Activated T-helper 2 cell treated with anti-CD3 and anti-CD28 coated beads, Interferon-gamma antibody, Interleukin-2, Interleukin-4, amounts not matched to agents 10 μg/mL and 5 μg/mL and 100 μg/mL, durations not matched to agents 14 hours and 24 hours and 36 hours (primary cell): ENCODE measurements at regions of chr7 and their contacts with region 1.

Region 1: GRCh38 chr7:105808703-105809590 is 67.5 kb downstream of the ATXN7L1 start:
- DNase-seq: peak; percentile 85
- H3K4me3 Mint-ChIP-seq: peak overlapping the region; percentile 26
- H3K27ac Mint-ChIP-seq: peak overlapping the region; percentile 81
- H3K4me1 Mint-ChIP-seq: peaks cover 76% of the 10 kb centered on the region
- H3K27me3 Mint-ChIP-seq: no peaks in the 10 kb centered on the region

Region 2: GRCh38 chr7:105298439-105298907 is 510.5 kb before region 1 on chr7:
- intact Hi-C with region 1: loop called (anchors 1 kb)
- DNase-seq: peak; percentile 23
- H3K4me3 Mint-ChIP-seq: peak overlapping the region; percentile 45
- H3K27ac Mint-ChIP-seq: peak overlapping the region; percentile 92
- H3K4me1 Mint-ChIP-seq: peaks cover 50% of the 10 kb centered on the region
- H3K27me3 Mint-ChIP-seq: no peaks in the 10 kb centered on the region

Region 3: GRCh38 chr7:105769901-105770628 is 38.9 kb before region 1 on chr7:
- intact Hi-C with region 1: loop called (anchors 1 kb)
- DNase-seq: no peak
- H3K4me3 Mint-ChIP-seq: no peak overlapping the region
- H3K27ac Mint-ChIP-seq: no peak overlapping the region
- H3K4me1 Mint-ChIP-seq: peaks cover 38% of the 10 kb centered on the region
- H3K27me3 Mint-ChIP-seq: no peaks in the 10 kb centered on the region

Region 4: DNA sequence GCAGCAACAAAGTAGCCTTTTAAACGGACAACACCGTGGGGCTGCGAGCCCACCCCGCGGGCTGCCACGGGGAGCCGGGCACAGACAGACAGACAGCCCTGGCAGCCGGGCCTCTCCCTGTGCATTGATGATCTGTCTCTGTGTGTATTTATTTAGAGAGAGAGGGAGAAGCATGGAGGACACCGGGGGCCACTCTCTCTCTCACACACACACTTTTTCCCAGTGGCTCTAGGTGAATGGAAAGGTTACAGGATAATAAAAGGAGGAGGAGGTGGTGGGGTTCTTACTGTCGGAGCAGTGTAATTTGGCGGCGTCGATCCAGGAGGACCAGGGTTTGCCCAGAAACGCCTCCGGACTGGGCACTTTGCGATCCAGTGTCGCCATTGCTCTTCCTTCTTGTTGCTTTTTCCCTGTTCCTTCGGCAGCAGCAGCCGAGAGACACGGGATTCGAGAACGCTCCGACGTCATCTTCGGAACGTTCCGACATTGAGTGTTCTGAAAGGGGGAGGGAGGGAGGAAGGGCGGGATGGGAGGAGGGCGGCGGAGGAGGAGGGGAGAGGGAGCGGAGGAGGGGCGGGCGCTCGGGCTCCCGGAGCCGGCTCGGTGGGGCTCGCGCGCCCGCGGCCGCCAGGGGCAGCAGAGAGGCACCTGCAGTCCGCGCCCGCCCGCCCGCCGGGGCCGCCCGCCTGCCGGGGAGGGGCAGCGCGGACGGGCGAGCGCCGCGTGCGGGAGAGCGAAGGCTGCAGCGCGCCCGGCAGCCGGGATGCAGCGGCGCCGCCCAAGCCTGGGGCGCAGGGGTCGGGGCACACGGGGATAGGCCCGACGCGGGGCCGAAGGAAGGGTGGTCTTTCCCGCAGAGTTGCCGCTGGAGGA is 67.4 kb after region 1 on chr7 and contains the start of gene ATXN7L1:
- intact Hi-C with region 1: loop called (anchors 1 kb)
- DNase-seq: peak; percentile 81
- H3K4me3 Mint-ChIP-seq: peak within 1 kb of the TSS; percentile 93
- H3K27ac Mint-ChIP-seq: peak within 1 kb of the TSS; percentile 87
- H3K4me1 Mint-ChIP-seq: peaks cover 45% of the 10 kb centered on the region
- H3K27me3 Mint-ChIP-seq: peaks cover 18% of the 10 kb centered on the region
- total RNA-seq, gene ATXN7L1: 11.1 and 12.4 TPM in 2 replicates

Region 5: DNA sequence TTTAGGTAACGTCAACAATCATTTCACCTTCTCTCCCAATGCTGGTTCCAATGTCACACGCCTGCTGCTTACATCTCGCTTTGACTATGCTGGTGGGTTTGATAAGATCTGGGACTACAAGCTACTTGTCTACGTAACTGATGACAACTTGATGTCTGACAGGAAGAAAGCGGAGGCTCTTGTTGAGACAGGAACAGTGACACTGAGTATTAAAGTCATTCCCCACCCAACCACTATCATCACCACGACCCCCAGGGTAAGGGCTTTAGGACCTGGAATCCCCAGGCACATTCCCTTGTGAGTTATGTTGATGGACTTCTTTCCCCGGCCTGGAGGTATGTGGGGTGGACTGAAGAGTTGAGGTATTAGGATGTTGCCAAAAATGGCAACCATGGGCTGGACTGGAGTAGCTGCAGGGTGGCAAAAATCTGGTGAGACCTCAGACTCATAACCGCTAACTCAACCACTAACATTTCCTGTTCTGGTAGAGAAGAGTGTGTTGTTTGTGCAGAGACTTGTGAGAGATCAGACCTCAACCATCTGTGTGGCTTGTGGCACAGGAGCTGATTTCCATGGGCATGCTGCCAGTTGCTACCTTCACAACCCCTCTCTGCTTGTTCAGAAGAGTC is 213.4 kb after region 1 on chr7:
- intact Hi-C with region 1: loop called (anchors 1 kb)
- DNase-seq: peak; percentile 68
- H3K4me3 Mint-ChIP-seq: peak overlapping the region; percentile 6
- H3K27ac Mint-ChIP-seq: peak overlapping the region; percentile 85
- H3K4me1 Mint-ChIP-seq: peaks cover 53% of the 10 kb centered on the region
- H3K27me3 Mint-ChIP-seq: peaks cover 7% of the 10 kb centered on the region

Region 6: DNA sequence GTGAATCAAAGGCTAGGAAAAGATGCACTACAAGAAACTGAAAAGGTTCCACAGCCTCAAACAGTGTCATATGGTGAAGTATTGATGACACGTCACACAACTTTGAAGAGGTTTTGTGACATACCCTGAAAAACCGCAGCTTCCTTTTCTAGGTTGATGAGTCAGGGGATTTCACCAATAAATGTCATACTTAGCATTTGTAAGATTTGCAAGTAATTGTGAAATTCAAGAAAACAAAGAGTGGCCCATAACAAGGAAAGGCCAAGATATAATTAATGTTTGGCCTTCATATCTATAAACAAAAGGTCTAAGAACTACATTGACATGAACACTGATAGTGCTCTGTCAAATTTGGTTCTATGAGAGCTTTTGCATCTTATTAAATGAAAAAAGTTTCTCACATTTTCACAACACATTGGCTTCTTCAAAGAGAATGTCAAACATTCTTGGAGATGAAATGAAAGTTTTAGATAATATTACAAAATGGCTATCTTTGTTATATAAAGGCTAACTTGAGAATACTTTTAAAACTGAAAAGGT is 537.8 kb after region 1 on chr7:
- intact Hi-C with region 1: loop called (anchors 1 kb)
- DNase-seq: peak; percentile 62
- H3K4me3 Mint-ChIP-seq: no peak overlapping the region
- H3K27ac Mint-ChIP-seq: peak overlapping the region; percentile 100
- H3K4me1 Mint-ChIP-seq: peaks cover 51% of the 10 kb centered on the region
- H3K27me3 Mint-ChIP-seq: no peaks in the 10 kb centered on the region

Region 7: GRCh38 chr7:107661081-107661864 is 1852.3 kb after region 1 on chr7:
- intact Hi-C with region 1: loop called (anchors 10 kb)
- DNase-seq: peak; percentile 54
- H3K4me3 Mint-ChIP-seq: peak overlapping the region; percentile 94
- H3K27ac Mint-ChIP-seq: peak overlapping the region; percentile 82
- H3K4me1 Mint-ChIP-seq: peaks cover 39% of the 10 kb centered on the region
- H3K27me3 Mint-ChIP-seq: no peaks in the 10 kb centered on the region